Activated CD4-positive, alpha-beta T cell treated with anti-CD3 and anti-CD28 coated beads, Interleukin-2, amount 10 ng/mL, durations not matched to agents 24 days and 14 days (primary cell): ENCODE measurements at regions of chr4 and their contacts with region 1.

Region 1: DNA sequence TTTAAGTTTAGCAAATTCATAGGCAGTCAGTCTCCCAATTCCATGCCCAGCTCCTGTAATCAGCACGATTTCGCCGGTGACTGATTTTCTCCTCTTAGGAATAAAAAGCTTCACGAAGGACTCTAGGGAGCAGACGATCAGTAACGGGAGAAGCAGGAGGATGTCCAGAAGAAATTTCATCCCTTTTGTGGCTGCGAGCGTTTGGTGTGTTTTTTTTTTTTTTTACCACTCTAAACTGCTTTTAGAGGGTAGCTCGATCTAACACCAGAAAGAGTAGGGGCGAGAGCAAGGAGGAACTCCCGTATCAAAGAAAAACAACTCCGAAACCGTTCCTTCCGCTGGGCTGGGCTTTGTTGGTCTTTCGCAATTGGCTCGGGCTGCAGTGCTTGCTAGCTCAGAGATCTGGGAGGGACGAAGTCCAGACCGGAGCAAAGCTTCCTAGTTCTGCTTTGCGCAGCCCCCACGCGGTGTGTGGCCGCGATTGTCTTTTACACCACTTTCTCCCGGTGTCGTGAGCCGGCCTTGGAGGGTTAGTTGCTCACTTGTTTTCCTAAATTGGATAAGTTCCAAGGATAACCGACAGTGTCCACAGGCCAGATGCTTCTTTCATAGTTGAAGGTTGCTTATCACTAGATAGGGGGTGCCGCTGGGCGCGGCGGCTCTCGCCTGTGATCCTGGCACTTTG is at the start of gene HSD17B11:
- DNase-seq: peak; percentile 94
- H3K4me3 Mint-ChIP-seq: peak within 1 kb of the TSS; percentile 93
- H3K27ac Mint-ChIP-seq: peak within 1 kb of the TSS; percentile 88
- H3K4me1 Mint-ChIP-seq: peaks cover 27% of the 10 kb centered on the region
- H3K27me3 Mint-ChIP-seq: peaks cover 8% of the 10 kb centered on the region
- total RNA-seq, gene HSD17B11: 12.1 and 13.0 TPM in 2 replicates

Region 2: GRCh38 chr4:87043044-87043820 is 347.8 kb before region 1 on chr4:
- intact Hi-C with region 1: no loop called
- DNase-seq: no peak
- H3K4me3 Mint-ChIP-seq: no peak overlapping the region
- H3K27ac Mint-ChIP-seq: no peak overlapping the region
- H3K4me1 Mint-ChIP-seq: peaks cover 17% of the 10 kb centered on the region
- H3K27me3 Mint-ChIP-seq: no peaks in the 10 kb centered on the region

Region 3: DNA sequence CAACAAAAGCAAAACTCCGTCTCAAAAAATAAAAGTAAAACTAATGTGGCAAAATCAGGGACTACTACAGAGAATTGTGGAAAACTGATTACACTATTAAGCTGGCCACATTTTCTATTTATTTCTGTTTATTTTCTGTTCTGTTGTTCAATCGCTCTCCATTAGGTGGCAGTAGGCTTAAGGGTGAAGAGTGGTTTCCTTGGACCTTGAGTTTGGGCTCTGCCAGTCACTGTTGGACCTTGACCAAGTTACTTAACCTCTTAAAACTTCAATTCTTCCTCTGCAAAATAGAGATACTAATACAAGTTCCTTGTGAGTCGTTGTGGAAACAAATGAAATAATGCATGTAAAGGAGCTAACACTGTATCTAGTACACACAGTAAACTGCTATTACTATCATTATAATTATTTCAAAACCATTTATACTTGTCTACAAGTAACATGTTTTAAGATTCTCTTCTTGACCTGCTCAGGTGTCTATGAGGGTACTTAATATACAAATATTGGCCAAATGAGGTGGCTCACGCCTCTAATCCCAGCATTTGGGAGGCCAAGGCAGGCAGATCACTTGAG is 15.2 kb before region 1 on chr4:
- intact Hi-C with region 1: no loop called
- DNase-seq: peak; percentile 62
- H3K4me3 Mint-ChIP-seq: no peak overlapping the region
- H3K27ac Mint-ChIP-seq: no peak overlapping the region
- H3K4me1 Mint-ChIP-seq: no peaks in the 10 kb centered on the region
- H3K27me3 Mint-ChIP-seq: no peaks in the 10 kb centered on the region

Region 4: DNA sequence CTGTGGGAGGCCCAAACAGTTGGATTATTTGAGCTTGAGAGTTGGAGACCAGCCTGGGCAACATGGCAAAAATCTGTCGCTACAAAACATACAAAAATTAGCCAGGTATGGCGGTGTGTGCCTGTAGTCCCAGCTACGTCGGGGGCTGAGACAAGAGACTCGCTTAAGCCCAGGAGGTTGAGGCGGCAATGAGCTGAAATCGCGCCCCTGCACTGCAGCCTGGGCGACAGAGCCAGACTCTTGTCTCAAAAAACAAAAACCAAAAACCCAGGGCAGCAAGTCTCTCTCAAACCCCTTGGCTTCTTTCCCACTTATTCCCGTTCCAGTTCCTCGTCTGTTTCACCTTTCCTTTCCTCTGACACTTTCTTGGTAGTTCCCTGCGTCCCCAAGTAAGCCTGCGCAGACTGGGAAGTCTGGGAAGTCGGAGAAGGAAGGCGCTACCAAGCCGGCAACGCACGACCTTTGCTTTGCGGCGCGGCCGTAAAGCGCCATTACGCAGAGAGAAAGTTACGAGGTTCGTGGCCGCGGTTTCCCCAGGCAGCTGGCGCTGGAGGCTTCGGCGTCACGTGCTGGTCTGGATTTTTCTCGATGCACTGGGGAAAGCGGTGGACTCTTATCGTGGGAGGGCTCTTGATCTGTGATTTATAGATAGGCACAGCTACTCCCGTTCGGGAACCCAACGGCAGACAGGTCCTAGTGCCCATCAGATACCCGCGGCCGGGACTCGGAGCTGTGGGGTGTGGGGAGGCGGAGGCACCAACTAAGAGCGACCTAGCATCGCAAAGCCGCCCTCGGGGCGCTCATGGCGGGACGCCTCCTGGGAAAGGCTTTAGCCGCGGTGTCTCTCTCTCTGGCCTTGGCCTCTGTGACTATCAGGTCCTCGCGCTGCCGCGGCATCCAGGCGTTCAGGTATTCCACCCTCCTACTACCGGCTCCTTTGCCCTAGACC is 31.3 kb after region 1 on chr4 and contains the start of gene NUDT9:
- intact Hi-C with region 1: loop called (anchors 1 kb)
- DNase-seq: peak; percentile 96
- H3K4me3 Mint-ChIP-seq: peak within 1 kb of the TSS; percentile 99
- H3K27ac Mint-ChIP-seq: peak within 1 kb of the TSS; percentile 98
- H3K4me1 Mint-ChIP-seq: peaks cover 19% of the 10 kb centered on the region
- H3K27me3 Mint-ChIP-seq: no peaks in the 10 kb centered on the region
- total RNA-seq, gene NUDT9: 16.5 and 17.4 TPM in 2 replicates

Region 5: GRCh38 chr4:87707279-87707918 is 316.4 kb after region 1 on chr4:
- intact Hi-C with region 1: no loop called
- DNase-seq: peak; percentile 7
- H3K4me3 Mint-ChIP-seq: no peak overlapping the region
- H3K27ac Mint-ChIP-seq: no peak overlapping the region
- H3K4me1 Mint-ChIP-seq: no peaks in the 10 kb centered on the region
- H3K27me3 Mint-ChIP-seq: peaks cover 2% of the 10 kb centered on the region